A549 (cell line): ENCODE measurements at regions of chr1 and their contacts with region 1.

Region 1: GRCh38 chr1:29033829-29034466 is 89.8 kb downstream of the TMEM200B start:
- DNase-seq: peak; percentile 38 to 46
- ATAC-seq: peak in 1 of 2 experiments; percentile 58; a peak in 2 of 6 replicates
- H3K4me3 ChIP-seq: no peak overlapping the region
- H3K27ac ChIP-seq: no peak overlapping the region
- H3K4me1 ChIP-seq: no peaks in the 10 kb centered on the region
- CTCF ChIP-seq: peak; percentile 80
- EP300 ChIP-seq: no peak
- POLR2A ChIP-seq: no peak
- RAD21 ChIP-seq: peak; percentile 93 to 94

Region 2: DNA sequence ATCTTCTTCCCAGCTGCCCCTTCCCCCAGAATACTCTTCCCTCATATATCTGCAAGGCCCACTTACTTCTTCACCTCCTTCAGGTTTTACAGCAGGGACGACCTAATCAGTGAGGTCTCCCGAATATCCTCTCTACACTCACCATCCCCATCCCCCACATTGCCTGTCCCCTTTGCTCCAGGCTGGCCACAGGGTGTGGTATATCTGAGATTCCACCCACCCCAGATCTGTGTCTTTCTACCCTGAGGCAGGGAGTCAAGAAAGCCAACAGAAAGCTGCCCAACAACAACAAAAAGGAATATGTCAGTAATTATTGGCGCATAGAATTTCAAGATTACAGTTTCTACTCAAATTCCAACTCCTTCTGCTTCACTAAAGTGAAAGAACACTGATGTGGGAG is 251.9 kb before region 1 on chr1:
- CTCF ChIA-PET with region 1: interaction called, 20 read pairs
- POLR2A ChIA-PET with region 1: no interaction called
- DNase-seq: no peak
- ATAC-seq: no peak
- H3K4me3 ChIP-seq: no peak overlapping the region
- H3K27ac ChIP-seq: no peak overlapping the region
- H3K4me1 ChIP-seq: no peaks in the 10 kb centered on the region
- CTCF ChIP-seq: no peak
- EP300 ChIP-seq: no peak
- POLR2A ChIP-seq: no peak
- RAD21 ChIP-seq: no peak

Region 3: GRCh38 chr1:29017975-29018712 is 15.8 kb before region 1 on chr1:
- CTCF ChIA-PET with region 1: interaction called, 15 read pairs
- POLR2A ChIA-PET with region 1: no interaction called
- DNase-seq: no peak
- ATAC-seq: no peak
- H3K4me3 ChIP-seq: no peak overlapping the region
- H3K27ac ChIP-seq: no peak overlapping the region
- H3K4me1 ChIP-seq: no peaks in the 10 kb centered on the region
- CTCF ChIP-seq: no peak
- EP300 ChIP-seq: no peak
- POLR2A ChIP-seq: no peak
- RAD21 ChIP-seq: no peak

Region 4: GRCh38 chr1:29202584-29203340 is 168.8 kb after region 1 on chr1:
- CTCF ChIA-PET with region 1: interaction called, 30 read pairs
- POLR2A ChIA-PET with region 1: no interaction called
- DNase-seq: peak; percentile 88 to 90
- ATAC-seq: peak; percentile 96 to 99
- H3K4me3 ChIP-seq: no peak overlapping the region
- H3K27ac ChIP-seq: peak overlapping the region in 1 of 2 experiments; percentile 65; a peak in 3 of 6 replicates
- H3K4me1 ChIP-seq: peaks cover 6% of the 10 kb centered on the region
- CTCF ChIP-seq: peak; percentile 80
- EP300 ChIP-seq: no peak
- POLR2A ChIP-seq: no peak
- RAD21 ChIP-seq: peak; percentile 83 to 91